ENCODE measurements at regions of chr7 and their contacts with region 1.

Region 1: DNA sequence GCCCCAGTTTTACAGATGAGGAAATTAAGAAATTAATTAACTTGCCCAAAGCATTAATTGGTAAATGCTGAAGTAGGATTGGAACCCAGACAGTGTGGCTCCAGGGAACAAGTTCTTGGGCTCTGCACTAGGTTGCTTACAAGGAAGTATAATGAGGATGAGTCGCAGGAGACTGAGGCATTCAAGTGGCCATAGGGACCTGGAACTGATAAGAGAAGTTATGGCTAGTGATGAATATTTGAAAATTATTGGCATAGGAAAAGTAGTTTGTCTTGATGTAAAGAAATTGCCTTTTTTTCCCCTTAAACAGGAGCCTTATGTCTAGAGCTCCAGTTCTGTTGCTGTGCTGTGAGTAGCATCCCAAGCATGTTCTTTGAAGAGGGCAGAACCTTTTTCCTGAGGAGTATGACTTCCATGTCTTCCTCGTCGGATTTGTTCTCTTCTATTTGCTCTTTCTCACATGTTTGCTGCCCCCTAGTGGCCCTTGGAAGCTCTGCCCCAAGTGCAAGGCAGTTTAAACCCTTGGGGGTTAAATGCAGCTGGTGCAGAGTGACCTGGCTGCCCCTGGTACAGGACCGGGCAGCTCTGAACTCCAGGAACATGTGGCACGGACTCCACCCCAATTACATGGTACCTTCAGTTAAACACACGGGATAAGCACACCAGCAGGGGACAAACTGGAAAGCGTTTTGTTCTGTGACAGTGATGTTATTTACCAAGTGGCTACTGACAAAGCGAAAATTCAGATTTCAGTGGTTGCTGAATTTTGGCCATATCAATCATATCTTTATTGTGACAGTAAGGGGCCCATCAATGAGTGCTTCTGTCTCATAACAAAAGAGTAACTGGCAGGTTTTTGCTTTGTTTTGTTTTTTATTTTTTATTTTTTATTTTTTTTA is 148.8 kb downstream of the HECW1 start:
- DNase-seq: peak; percentile 79
- ATAC-seq: peak; percentile 98
- H3K4me3 ChIP-seq: no peak overlapping the region
- H3K27ac ChIP-seq: no peak overlapping the region
- H3K4me1 ChIP-seq: 0 out of 4 replicates have a peak, but pooled peaks cover 0 to 7% of the 10 kb centered on the region in 2 experiments
- H3K27me3 ChIP-seq: no peaks in the 10 kb centered on the region
- CTCF ChIP-seq: peak; percentile 83 to 97 (median 95)
- POLR2A ChIP-seq: no peak
- RAD21 ChIP-seq: peak; percentile 88

Region 2: DNA sequence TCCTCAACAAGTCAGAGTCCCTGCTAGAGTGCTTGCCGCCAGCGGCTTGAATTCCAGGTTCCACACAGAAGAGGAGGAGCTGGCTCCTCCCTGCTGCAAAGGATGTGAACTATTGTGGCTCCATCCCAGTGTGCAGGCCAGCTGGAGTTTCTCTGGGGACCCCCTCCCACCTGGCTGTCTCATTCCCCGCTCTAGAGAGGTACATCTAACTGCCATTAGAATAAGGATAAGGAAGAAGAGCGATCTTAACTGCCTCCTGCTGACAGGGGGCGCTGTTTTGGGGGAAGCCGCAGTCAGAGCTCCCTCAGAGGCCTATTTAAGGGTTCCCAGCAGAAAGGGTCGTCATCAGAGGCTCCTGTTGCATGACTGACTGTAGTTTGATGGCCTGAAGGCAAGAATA is 189.6 kb before region 1 on chr7:
- CTCF ChIA-PET with region 1: interaction called, 5 read pairs
- POLR2A ChIA-PET with region 1: no interaction called
- RAD21 ChIA-PET with region 1: interaction called in 1 of 2 experiments, 3 read pairs
- intact Hi-C with region 1: loop called (anchors 5 kb)
- DNase-seq: peak; percentile 12
- ATAC-seq: peak; percentile 90
- H3K4me3 ChIP-seq: no peak overlapping the region
- H3K27ac ChIP-seq: no peak overlapping the region
- H3K4me1 ChIP-seq: no peaks in the 10 kb centered on the region
- H3K27me3 ChIP-seq: no peaks in the 10 kb centered on the region
- CTCF ChIP-seq: peak; percentile 23 to 82 (median 76); a peak in 4 of 6 replicates
- POLR2A ChIP-seq: no peak
- RAD21 ChIP-seq: peak; percentile 37

Region 3: GRCh38 chr7:43248961-43249822 is 12.0 kb before region 1 on chr7:
- CTCF ChIA-PET with region 1: interaction called, 18 read pairs
- POLR2A ChIA-PET with region 1: no interaction called
- RAD21 ChIA-PET with region 1: no interaction called
- intact Hi-C with region 1: no loop called
- DNase-seq: peak; percentile 33
- ATAC-seq: peak; percentile 90
- H3K4me3 ChIP-seq: peak overlapping the region; percentile 56 to 68
- H3K27ac ChIP-seq: peak overlapping the region; percentile 48
- H3K4me1 ChIP-seq: peaks cover 11 to 21% of the 10 kb centered on the region in 2 experiments; a peak in 3 of 4 replicates
- H3K27me3 ChIP-seq: no peaks in the 10 kb centered on the region
- CTCF ChIP-seq: no peak
- POLR2A ChIP-seq: peak; percentile 55
- RAD21 ChIP-seq: peak; percentile 9; the same call in 1 of the 2 replicates

Region 4: DNA sequence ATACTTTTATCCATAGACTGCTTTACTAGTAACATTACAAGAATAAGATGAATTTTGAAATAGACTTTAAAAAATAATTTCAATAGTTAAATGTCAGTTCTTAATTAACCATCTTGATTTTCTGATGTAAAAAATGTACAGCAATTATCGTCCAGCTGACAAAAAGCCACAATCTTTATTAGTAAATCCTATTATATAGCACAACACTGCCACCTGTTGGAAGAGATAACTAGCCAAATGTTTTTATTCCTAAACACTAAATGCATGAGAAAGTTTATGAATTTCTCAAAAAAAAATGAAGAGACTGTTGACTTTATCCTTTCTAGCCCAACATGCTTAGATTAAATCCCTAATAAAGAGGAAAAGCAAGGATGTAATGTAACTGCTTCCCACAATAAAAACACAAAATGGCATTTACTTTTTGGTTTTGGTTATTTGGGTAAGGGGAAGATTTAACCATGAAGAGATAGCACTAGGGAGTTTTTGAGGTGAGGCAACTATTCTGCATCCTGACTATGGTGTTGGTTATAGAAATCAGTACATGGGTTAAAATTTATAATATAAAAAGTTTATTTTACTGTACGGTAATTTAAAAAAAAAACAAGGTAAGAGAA is 460.1 kb after region 1 on chr7:
- CTCF ChIA-PET with region 1: no interaction called
- POLR2A ChIA-PET with region 1: no interaction called
- RAD21 ChIA-PET with region 1: no interaction called
- intact Hi-C with region 1: loop called (anchors 5 kb)
- DNase-seq: no peak
- ATAC-seq: no peak
- H3K4me3 ChIP-seq: no peak overlapping the region
- H3K27ac ChIP-seq: no peak overlapping the region
- H3K4me1 ChIP-seq: no peaks in the 10 kb centered on the region
- H3K27me3 ChIP-seq: no peaks in the 10 kb centered on the region
- CTCF ChIP-seq: peak; percentile 39 to 79 (median 78); a peak in 5 of 6 replicates
- POLR2A ChIP-seq: no peak
- RAD21 ChIP-seq: peak; percentile 63

Region 5: DNA sequence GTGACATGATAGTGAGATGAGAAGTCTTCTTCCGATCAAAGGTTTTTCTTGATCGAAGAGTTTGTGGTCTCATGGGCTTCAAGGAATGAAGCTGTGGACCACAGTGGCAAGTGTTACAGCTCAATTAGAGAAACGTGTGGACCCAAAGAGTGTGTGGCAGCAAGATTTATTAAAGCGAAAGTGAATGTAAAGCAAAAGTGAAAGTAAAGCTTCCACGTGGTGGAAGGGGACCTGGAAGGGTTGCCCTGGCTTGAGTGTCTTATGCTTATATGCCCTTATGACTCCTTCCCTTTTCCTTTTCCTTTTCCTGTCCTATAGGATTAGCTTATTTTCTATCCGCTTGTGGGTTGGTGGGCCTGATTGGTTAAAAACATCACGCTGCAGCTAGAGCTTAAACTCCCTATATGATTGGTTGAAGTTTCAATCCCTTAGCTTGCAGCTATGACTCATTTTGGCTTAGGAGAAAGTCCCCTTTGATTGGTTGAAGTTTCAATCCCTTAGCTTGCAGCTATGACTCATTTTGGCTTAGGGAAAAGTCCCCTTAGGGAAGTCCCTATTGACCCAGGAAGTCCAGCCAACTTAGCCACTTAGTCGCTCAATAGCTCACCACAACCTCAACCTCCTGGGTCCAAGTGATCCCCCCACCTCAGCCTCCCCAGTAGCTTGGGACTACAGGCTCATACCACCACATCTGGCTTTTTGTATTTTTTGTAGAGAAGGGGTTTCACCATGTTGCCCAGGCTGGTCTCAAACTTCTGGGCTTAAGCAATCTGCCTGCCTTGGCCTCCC is 573.4 kb after region 1 on chr7:
- CTCF ChIA-PET with region 1: no interaction called
- POLR2A ChIA-PET with region 1: no interaction called
- RAD21 ChIA-PET with region 1: no interaction called
- intact Hi-C with region 1: loop called (anchors 10 kb)
- DNase-seq: no peak
- ATAC-seq: no peak
- H3K4me3 ChIP-seq: no peak overlapping the region
- H3K27ac ChIP-seq: no peak overlapping the region
- H3K4me1 ChIP-seq: peaks cover 0 to 24% of the 10 kb centered on the region in 2 experiments; a peak in 2 of 4 replicates
- H3K27me3 ChIP-seq: no peaks in the 10 kb centered on the region
- CTCF ChIP-seq: no peak
- POLR2A ChIP-seq: no peak
- RAD21 ChIP-seq: no peak